ENCODE measurements at regions of chr4 and their contacts with region 1.

Region 1: GRCh38 chr4:46329118-46329976 is 60.6 kb downstream of the GABRA2 start:
- DNase-seq: peak; percentile 66
- H3K4me3 ChIP-seq: no peak overlapping the region
- H3K27ac ChIP-seq: no peak overlapping the region
- H3K4me1 ChIP-seq: no peaks in the 10 kb centered on the region
- H3K27me3 ChIP-seq: peaks cover 31% of the 10 kb centered on the region
- CTCF ChIP-seq: peak; percentile 67

Region 2: DNA sequence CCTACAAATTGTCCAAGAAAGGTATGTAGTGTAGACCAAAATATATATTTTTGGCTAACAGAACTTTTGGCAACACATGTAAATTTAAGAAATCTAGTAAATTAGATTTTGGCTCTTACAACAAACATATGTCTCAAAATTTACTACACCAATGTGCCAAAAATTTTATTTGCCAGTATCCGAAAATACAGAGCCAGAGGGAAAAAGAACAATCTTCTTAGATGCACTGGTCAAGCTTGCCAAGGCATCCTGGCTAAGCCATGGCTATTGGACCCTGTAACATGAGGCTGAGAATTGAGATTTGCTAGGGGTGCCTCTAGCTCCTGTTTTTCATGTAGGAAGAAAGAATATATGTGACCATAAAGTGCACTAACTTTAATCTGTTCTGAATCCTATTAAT is 297.3 kb before region 1 on chr4:
- CTCF ChIA-PET with region 1: no interaction called
- POLR2A ChIA-PET with region 1: no interaction called
- intact Hi-C with region 1: no loop called
- DNase-seq: no peak
- H3K4me3 ChIP-seq: no peak overlapping the region
- H3K27ac ChIP-seq: no peak overlapping the region
- H3K4me1 ChIP-seq: no peaks in the 10 kb centered on the region
- H3K27me3 ChIP-seq: no peaks in the 10 kb centered on the region
- CTCF ChIP-seq: no peak

Region 3: DNA sequence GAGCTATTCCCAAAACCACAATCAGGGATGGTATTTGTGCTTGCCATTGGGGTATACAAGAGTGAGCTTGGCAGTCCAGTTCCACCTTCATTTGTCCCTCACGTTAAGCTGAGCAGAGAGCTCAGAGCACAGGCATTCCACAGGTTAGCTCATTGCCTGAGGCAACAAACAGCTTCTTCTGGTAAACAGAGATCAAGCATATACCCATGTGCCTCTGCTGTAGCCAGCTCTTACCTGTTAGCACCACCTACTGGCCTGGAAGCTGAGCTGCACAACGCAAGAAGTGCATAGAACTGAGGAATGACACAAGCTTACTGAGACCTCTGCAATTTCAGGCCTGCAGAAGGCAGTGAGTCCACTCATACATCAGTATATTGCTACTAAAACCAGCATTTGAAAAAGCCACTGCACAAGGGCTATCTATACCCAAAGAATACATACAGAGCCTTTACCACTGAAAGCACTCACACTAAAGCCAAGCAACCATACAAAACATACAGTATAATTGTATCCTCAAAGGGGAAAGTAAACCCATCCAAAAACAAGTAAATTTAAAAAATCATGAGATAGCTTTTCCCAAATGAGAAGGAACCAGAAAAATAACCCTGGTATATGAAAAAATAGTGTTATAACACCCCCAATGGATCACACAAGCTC is 318.9 kb after region 1 on chr4:
- CTCF ChIA-PET with region 1: interaction called, 42 read pairs
- POLR2A ChIA-PET with region 1: interaction called, 5 read pairs
- intact Hi-C with region 1: loop called (anchors 1 kb)
- DNase-seq: peak; percentile 64
- H3K4me3 ChIP-seq: no peak overlapping the region
- H3K27ac ChIP-seq: no peak overlapping the region
- H3K4me1 ChIP-seq: no peaks in the 10 kb centered on the region
- H3K27me3 ChIP-seq: peaks cover 12% of the 10 kb centered on the region
- CTCF ChIP-seq: peak; percentile 78

Region 4: DNA sequence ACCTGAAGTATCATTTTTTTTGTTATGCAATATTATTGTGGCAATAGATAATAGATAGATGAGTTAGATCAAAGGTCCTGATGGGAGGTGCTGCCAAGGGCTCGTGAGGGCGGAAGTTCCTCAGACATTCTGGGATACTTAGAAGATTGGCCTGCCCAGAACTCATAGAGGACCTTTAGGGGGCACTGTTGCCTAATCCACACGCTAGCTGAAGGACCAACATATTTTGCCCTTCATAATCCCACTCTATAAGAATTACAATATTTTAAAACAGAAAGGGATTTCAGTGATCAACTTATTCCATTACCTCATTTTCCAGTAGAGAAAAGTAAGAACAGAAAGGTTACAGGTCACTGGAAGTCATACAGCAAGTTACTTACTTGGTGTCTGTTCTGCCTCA is 602.6 kb after region 1 on chr4:
- CTCF ChIA-PET with region 1: no interaction called
- POLR2A ChIA-PET with region 1: no interaction called
- intact Hi-C with region 1: no loop called
- DNase-seq: peak; percentile 67
- H3K4me3 ChIP-seq: no peak overlapping the region
- H3K27ac ChIP-seq: no peak overlapping the region
- H3K4me1 ChIP-seq: no peaks in the 10 kb centered on the region
- H3K27me3 ChIP-seq: peaks cover 28% of the 10 kb centered on the region
- CTCF ChIP-seq: peak; percentile 79

Measured in A673 (cell line).